ENCODE measurements at regions of chr1 and their contacts with region 1.

Region 1: GRCh38 chr1:151156515-151156819 is at the start of gene TNFAIP8L2:
- DNase-seq: peak; percentile 61 to 85 (median 65)
- H3K4me3 ChIP-seq: peak within 1 kb of the TSS; percentile 82 to 98
- H3K4me3 Mint-ChIP-seq: peak within 1 kb of the TSS; percentile 98 to 100 (median 98)
- H3K27ac ChIP-seq: peak within 1 kb of the TSS; percentile 68
- H3K27ac Mint-ChIP-seq: peak within 1 kb of the TSS; percentile 89 to 96 (median 94)
- H3K4me1 ChIP-seq: peaks cover 47% of the 10 kb centered on the region
- H3K4me1 Mint-ChIP-seq: peaks cover 25 to 55% (median 35%) of the 10 kb centered on the region in 4 donors
- H3K27me3 ChIP-seq: no peaks in the 10 kb centered on the region
- H3K27me3 Mint-ChIP-seq: no peaks in the 10 kb centered on the region
- total RNA-seq, gene TNFAIP8L2: 45.9 to 49.7 TPM

Region 2: DNA sequence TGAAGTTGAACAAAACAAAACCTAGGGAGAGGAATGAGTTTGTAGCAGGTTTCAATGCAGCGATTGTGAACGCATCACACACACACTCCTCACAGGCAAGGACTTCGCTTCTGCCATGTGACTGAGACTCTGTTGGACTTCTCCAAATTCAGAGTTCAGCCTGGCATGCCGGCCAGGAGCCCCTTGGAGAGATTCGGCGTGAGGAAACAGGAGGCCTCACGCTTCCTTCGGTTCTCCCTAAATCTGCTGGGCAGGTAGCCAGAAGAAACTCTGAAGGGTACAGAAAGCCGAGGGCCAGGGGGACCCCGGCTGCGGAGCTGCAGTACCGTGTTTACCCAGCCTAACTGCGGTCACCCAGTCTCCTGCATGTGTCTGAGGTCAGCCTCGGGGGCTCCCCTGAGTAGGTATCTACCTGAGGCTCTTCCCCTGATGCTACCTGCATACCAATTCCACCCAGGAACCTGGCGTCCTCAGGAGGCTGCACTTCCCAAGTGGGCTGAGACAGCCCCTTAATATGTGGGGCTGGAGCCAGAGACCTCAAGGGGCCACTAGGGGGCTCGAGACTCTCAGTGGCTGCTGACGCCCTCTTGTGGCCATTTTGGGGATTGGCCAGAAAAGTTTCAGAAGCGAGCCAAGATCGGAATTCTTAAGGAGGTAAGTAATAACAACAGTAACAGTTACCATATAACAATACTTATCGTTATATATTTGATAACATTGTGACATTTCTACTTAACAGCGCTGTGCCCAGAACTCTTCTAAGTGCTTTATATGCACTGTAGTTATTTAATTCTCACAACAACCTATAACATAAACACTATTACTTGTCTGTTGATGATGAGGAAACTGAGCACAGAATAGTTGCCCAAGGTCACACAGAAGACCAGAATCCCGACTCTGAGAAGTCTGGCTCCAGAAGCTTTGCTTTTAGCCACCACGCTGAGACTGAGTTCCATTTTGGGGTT is 177.1 kb before region 1 on chr1:
- CTCF ChIA-PET with region 1: interaction called, 5 read pairs
- POLR2A ChIA-PET with region 1: interaction called, 5 read pairs
- intact Hi-C with region 1: loop called (anchors 1 kb)
- DNase-seq: peak; percentile 83 to 87 (median 85)
- H3K4me3 ChIP-seq: peak overlapping the region in 1 of 2 donors; percentile 52
- H3K4me3 Mint-ChIP-seq: peak overlapping the region in 4 of 8 donors; percentile 29 to 59 (median 41)
- H3K27ac ChIP-seq: peak overlapping the region; percentile 11
- H3K27ac Mint-ChIP-seq: peak overlapping the region in 6 of 7 donors; percentile 48 to 83 (median 64)
- H3K4me1 ChIP-seq: peaks cover 39% of the 10 kb centered on the region
- H3K4me1 Mint-ChIP-seq: peaks cover 20 to 44% (median 31%) of the 10 kb centered on the region in 4 donors
- H3K27me3 ChIP-seq: no peaks in the 10 kb centered on the region
- H3K27me3 Mint-ChIP-seq: no peaks in the 10 kb centered on the region

Region 3: GRCh38 chr1:151024540-151025146 is 131.8 kb before region 1 on chr1:
- CTCF ChIA-PET with region 1: interaction called, 80 read pairs
- POLR2A ChIA-PET with region 1: interaction called, 9 read pairs
- intact Hi-C with region 1: loop called (anchors 1 kb)
- DNase-seq: peak; percentile 81 to 86 (median 85)
- H3K4me3 ChIP-seq: no peak overlapping the region
- H3K4me3 Mint-ChIP-seq: peak overlapping the region in 5 of 8 donors; percentile 22 to 65 (median 54)
- H3K27ac ChIP-seq: no peak overlapping the region
- H3K27ac Mint-ChIP-seq: peak overlapping the region; percentile 41 to 86 (median 73)
- H3K4me1 ChIP-seq: peaks cover 7% of the 10 kb centered on the region
- H3K4me1 Mint-ChIP-seq: peaks cover 5 to 11% (median 6%) of the 10 kb centered on the region in 4 donors
- H3K27me3 ChIP-seq: no peaks in the 10 kb centered on the region
- H3K27me3 Mint-ChIP-seq: no peaks in the 10 kb centered on the region

Region 4: GRCh38 chr1:151059078-151059907 is 97.2 kb before region 1 on chr1 and contains the start of gene CDC42SE1:
- CTCF ChIA-PET with region 1: interaction called, 19 read pairs
- POLR2A ChIA-PET with region 1: interaction called, 45 read pairs
- intact Hi-C with region 1: no loop called
- DNase-seq: peak; percentile 81 to 85 (median 85)
- H3K4me3 ChIP-seq: peak within 1 kb of the TSS; percentile 89 to 93
- H3K4me3 Mint-ChIP-seq: peak within 1 kb of the TSS; percentile 96 to 100 (median 100)
- H3K27ac ChIP-seq: peak within 1 kb of the TSS; percentile 90
- H3K27ac Mint-ChIP-seq: peak within 1 kb of the TSS; percentile 98 to 100 (median 99)
- H3K4me1 ChIP-seq: peaks cover 45% of the 10 kb centered on the region
- H3K4me1 Mint-ChIP-seq: peaks cover 31 to 70% (median 38%) of the 10 kb centered on the region in 4 donors
- H3K27me3 ChIP-seq: no peaks in the 10 kb centered on the region
- H3K27me3 Mint-ChIP-seq: peaks cover 0 to 1% of the 10 kb centered on the region in 2 donors
- total RNA-seq, gene CDC42SE1: 478 to 483 TPM

Region 5: DNA sequence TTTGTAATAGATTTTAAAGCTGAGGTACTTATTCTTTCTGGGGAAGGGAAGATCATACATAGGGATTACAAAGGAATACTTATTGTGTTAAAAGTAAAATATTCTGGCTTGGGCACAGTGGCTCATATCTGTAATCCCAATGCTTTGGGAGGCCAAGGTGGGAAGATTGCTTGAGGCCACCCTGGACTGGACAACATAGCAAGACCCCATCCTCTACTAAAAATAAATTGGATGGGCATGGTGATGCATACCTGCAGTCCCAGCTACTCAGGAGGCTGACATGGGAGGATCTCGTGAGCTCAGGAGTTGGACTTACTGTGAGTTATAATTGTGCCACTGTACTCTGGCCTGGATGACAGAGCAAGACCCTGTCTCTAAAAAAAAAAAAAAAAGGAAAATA is 58.3 kb before region 1 on chr1:
- CTCF ChIA-PET with region 1: interaction called, 324 read pairs
- POLR2A ChIA-PET with region 1: interaction called, 63 read pairs
- intact Hi-C with region 1: loop called (anchors 1 kb)
- DNase-seq: no peak
- H3K4me3 ChIP-seq: no peak overlapping the region
- H3K4me3 Mint-ChIP-seq: no peak overlapping the region
- H3K27ac ChIP-seq: no peak overlapping the region
- H3K27ac Mint-ChIP-seq: no peak overlapping the region
- H3K4me1 ChIP-seq: no peaks in the 10 kb centered on the region
- H3K4me1 Mint-ChIP-seq: no peaks in the 10 kb centered on the region
- H3K27me3 ChIP-seq: no peaks in the 10 kb centered on the region
- H3K27me3 Mint-ChIP-seq: no peaks in the 10 kb centered on the region

Region 6: GRCh38 chr1:151189638-151190445 is 33.4 kb after region 1 on chr1 and contains the start of gene VPS72:
- CTCF ChIA-PET with region 1: interaction called, 25 read pairs
- POLR2A ChIA-PET with region 1: interaction called, 46 read pairs
- intact Hi-C with region 1: loop called (anchors 5 kb)
- DNase-seq: peak; percentile 81 to 92 (median 84)
- H3K4me3 ChIP-seq: peak within 1 kb of the TSS; percentile 67 to 78
- H3K4me3 Mint-ChIP-seq: peak within 1 kb of the TSS; percentile 92 to 100 (median 98)
- H3K27ac ChIP-seq: peak within 1 kb of the TSS; percentile 89
- H3K27ac Mint-ChIP-seq: peak within 1 kb of the TSS; percentile 91 to 100 (median 98)
- H3K4me1 ChIP-seq: peaks cover 25% of the 10 kb centered on the region
- H3K4me1 Mint-ChIP-seq: peaks cover 22 to 43% (median 33%) of the 10 kb centered on the region in 4 donors
- H3K27me3 ChIP-seq: no peaks in the 10 kb centered on the region
- H3K27me3 Mint-ChIP-seq: no peaks in the 10 kb centered on the region
- total RNA-seq, gene VPS72: 68.1 to 68.4 TPM

Region 7: GRCh38 chr1:151327223-151327902 is 170.9 kb after region 1 on chr1 and contains the start of gene PI4KB:
- CTCF ChIA-PET with region 1: no interaction called
- POLR2A ChIA-PET with region 1: no interaction called
- intact Hi-C with region 1: loop called (anchors 5 kb)
- DNase-seq: peak; percentile 95 to 97 (median 97)
- H3K4me3 ChIP-seq: peak within 1 kb of the TSS; percentile 74 to 79
- H3K4me3 Mint-ChIP-seq: peak within 1 kb of the TSS; percentile 92 to 98 (median 97)
- H3K27ac ChIP-seq: peak within 1 kb of the TSS; percentile 84
- H3K27ac Mint-ChIP-seq: peak within 1 kb of the TSS; percentile 90 to 99 (median 99)
- H3K4me1 ChIP-seq: peaks cover 35% of the 10 kb centered on the region
- H3K4me1 Mint-ChIP-seq: peaks cover 31 to 57% (median 40%) of the 10 kb centered on the region in 4 donors
- H3K27me3 ChIP-seq: no peaks in the 10 kb centered on the region
- H3K27me3 Mint-ChIP-seq: no peaks in the 10 kb centered on the region
- total RNA-seq, gene PI4KB: 87.2 to 97.4 TPM